ENCODE measurements at regions of chr12 and their contacts with region 1.

Region 1: DNA sequence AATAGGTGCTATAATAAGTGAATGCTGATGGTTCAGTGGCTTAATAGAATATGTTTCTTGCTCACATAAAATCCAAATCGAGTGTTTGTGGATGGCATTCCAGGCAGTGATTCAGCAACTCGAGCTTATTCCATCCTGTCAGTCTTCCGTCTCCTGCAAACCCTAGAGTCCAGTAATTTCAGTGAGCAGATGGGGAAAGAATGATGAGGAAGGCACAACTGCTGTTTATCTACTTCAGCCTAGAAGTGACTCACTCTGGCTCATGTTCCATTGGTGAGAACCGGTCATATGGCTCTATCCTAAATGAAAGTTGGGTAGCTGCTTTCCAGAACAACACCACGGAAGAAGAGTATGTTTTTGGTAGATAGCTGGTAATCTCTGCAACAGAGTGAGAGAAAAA is 421.8 kb upstream of the PDE3A start:
- DNase-seq: peak; percentile 97
- H3K4me3 ChIP-seq: no peak overlapping the region
- H3K27ac ChIP-seq: peak overlapping the region; percentile 87
- H3K4me1 ChIP-seq: peaks cover 18% of the 10 kb centered on the region
- H3K27me3 ChIP-seq: no peaks in the 10 kb centered on the region
- CTCF ChIP-seq: no peak
- POLR2A ChIP-seq: peak; percentile 70

Region 2: DNA sequence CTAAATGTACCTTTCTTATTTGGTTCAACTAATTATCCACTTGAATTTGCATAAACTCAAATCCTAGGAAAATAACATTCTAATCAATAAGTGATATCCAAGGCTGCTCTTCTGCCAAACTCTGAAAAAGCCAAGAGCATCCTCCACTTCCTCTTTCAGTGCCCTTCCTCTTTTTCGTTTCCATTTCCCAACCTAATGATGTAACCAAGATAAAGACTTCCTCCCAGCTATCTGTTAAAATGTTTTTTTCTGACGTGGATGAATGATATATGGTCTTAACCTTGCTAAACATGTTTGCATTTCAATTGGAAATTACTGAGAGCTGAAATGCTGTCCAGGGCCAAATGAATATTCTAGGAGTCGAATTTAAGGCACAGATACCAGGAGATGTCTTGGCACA is 37.7 kb before region 1 on chr12:
- CTCF ChIA-PET with region 1: no interaction called
- POLR2A ChIA-PET with region 1: no interaction called
- dilution Hi-C with region 1: no loop called
- intact Hi-C with region 1: no loop called
- DNase-seq: no peak
- H3K4me3 ChIP-seq: no peak overlapping the region
- H3K27ac ChIP-seq: no peak overlapping the region
- H3K4me1 ChIP-seq: peaks cover 6% of the 10 kb centered on the region
- H3K27me3 ChIP-seq: no peaks in the 10 kb centered on the region
- CTCF ChIP-seq: no peak
- POLR2A ChIP-seq: no peak

Region 3: GRCh38 chr12:19959353-19959752 is 12.8 kb after region 1 on chr12:
- CTCF ChIA-PET with region 1: interaction called, 5 read pairs
- POLR2A ChIA-PET with region 1: interaction called, 3 read pairs
- dilution Hi-C with region 1: no loop called
- intact Hi-C with region 1: loop called (anchors 1 kb)
- DNase-seq: peak; percentile 79
- H3K4me3 ChIP-seq: peak overlapping the region in 1 of 3 experiments; percentile 43
- H3K27ac ChIP-seq: peak overlapping the region; percentile 86
- H3K4me1 ChIP-seq: peaks cover 49% of the 10 kb centered on the region
- H3K27me3 ChIP-seq: no peaks in the 10 kb centered on the region
- CTCF ChIP-seq: no peak
- POLR2A ChIP-seq: no peak

Region 4: GRCh38 chr12:19967486-19967885 is 20.9 kb after region 1 on chr12:
- CTCF ChIA-PET with region 1: interaction called, 5 read pairs
- POLR2A ChIA-PET with region 1: no interaction called
- dilution Hi-C with region 1: no loop called
- intact Hi-C with region 1: loop called (anchors 2 kb)
- DNase-seq: peak; percentile 85
- H3K4me3 ChIP-seq: no peak overlapping the region
- H3K27ac ChIP-seq: peak overlapping the region; percentile 65
- H3K4me1 ChIP-seq: peaks cover 43% of the 10 kb centered on the region
- H3K27me3 ChIP-seq: no peaks in the 10 kb centered on the region
- CTCF ChIP-seq: no peak
- POLR2A ChIP-seq: no peak